ENCODE measurements at regions of chr2 and their contacts with region 1.

Region 1: GRCh38 chr2:132547074-132547687 is 122.8 kb downstream of the LYPD1 start:
- DNase-seq: peak; percentile 66 to 74
- H3K4me3 ChIP-seq: no peak overlapping the region
- H3K4me3 Mint-ChIP-seq: no peak overlapping the region
- H3K27ac Mint-ChIP-seq: no peak overlapping the region
- H3K4me1 ChIP-seq: peaks cover 16% of the 10 kb centered on the region
- H3K4me1 Mint-ChIP-seq: peaks cover 16% of the 10 kb centered on the region
- H3K27me3 ChIP-seq: no peaks in the 10 kb centered on the region
- H3K27me3 Mint-ChIP-seq: no peaks in the 10 kb centered on the region
- CTCF ChIP-seq: peak; percentile 65 to 76

Region 2: GRCh38 chr2:132416081-132416881 is 130.9 kb before region 1 on chr2 and contains the start of gene GPR39:
- CTCF ChIA-PET with region 1: no interaction called
- POLR2A ChIA-PET with region 1: no interaction called
- intact Hi-C with region 1: loop called (anchors 5 kb)
- DNase-seq: peak; percentile 99
- H3K4me3 ChIP-seq: peak within 1 kb of the TSS; percentile 59
- H3K4me3 Mint-ChIP-seq: peak within 1 kb of the TSS; percentile 84
- H3K27ac Mint-ChIP-seq: peak within 1 kb of the TSS; percentile 97
- H3K4me1 ChIP-seq: peaks cover 51% of the 10 kb centered on the region
- H3K4me1 Mint-ChIP-seq: peaks cover 49% of the 10 kb centered on the region
- H3K27me3 ChIP-seq: no peaks in the 10 kb centered on the region
- H3K27me3 Mint-ChIP-seq: no peaks in the 10 kb centered on the region
- CTCF ChIP-seq: no peak
- total RNA-seq, gene GPR39: 26.8 and 28.7 TPM in 2 replicates

Region 3: GRCh38 chr2:132562245-132562644 is 15.1 kb after region 1 on chr2:
- CTCF ChIA-PET with region 1: no interaction called
- POLR2A ChIA-PET with region 1: no interaction called
- intact Hi-C with region 1: no loop called
- DNase-seq: no peak
- H3K4me3 ChIP-seq: no peak overlapping the region
- H3K4me3 Mint-ChIP-seq: no peak overlapping the region
- H3K27ac Mint-ChIP-seq: no peak overlapping the region
- H3K4me1 ChIP-seq: peaks cover 5% of the 10 kb centered on the region; the same call in 1 of the 2 replicates
- H3K4me1 Mint-ChIP-seq: peaks cover 8% of the 10 kb centered on the region
- H3K27me3 ChIP-seq: no peaks in the 10 kb centered on the region
- H3K27me3 Mint-ChIP-seq: no peaks in the 10 kb centered on the region
- CTCF ChIP-seq: no peak

Region 4: DNA sequence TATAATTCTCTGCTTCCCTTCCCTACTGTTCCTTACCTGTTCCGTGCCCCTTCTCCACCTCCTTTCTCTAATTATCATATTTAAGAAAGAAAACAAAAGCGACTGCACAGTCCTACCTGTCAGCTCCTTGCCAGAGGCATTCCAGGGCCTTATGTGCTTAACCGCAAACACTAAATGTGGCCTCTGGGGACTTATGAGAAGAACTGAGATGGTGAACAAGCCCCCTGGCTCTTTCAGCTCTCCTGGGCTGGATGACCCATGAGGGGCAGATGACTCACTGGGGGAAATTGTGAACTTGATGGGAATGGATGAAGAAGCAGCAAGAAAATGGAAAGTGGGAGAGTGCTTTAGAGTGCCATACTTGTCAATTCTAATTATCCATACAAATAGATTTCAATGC is 229.1 kb after region 1 on chr2:
- CTCF ChIA-PET with region 1: no interaction called
- POLR2A ChIA-PET with region 1: no interaction called
- intact Hi-C with region 1: no loop called
- DNase-seq: no peak
- H3K4me3 ChIP-seq: no peak overlapping the region
- H3K4me3 Mint-ChIP-seq: no peak overlapping the region
- H3K27ac Mint-ChIP-seq: no peak overlapping the region
- H3K4me1 ChIP-seq: peaks cover 11% of the 10 kb centered on the region; the same call in 1 of the 2 replicates
- H3K4me1 Mint-ChIP-seq: peaks cover 6% of the 10 kb centered on the region
- H3K27me3 ChIP-seq: no peaks in the 10 kb centered on the region
- H3K27me3 Mint-ChIP-seq: no peaks in the 10 kb centered on the region
- CTCF ChIP-seq: no peak

Region 5: DNA sequence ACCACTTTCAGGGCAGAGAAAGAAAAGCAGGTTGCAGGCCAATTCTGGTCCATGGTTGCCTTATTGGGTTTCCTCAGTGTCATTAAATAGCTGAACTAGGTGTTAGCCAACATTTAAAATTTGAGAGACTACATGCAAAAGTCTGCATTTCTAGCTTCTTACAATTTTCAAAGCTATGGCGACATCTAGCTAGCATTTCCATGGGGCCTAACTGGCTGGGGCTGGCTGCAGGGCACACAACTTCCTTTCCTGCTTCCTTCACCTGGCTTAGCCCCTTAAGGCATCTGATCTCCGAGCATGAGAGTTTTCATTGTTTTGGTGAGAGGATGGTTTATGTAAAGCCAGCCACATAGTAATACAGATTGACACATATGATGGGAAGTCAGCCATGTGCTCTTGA is 305.9 kb after region 1 on chr2:
- CTCF ChIA-PET with region 1: no interaction called
- POLR2A ChIA-PET with region 1: no interaction called
- intact Hi-C with region 1: loop called (anchors 5 kb)
- DNase-seq: no peak
- H3K4me3 ChIP-seq: no peak overlapping the region
- H3K4me3 Mint-ChIP-seq: no peak overlapping the region
- H3K27ac Mint-ChIP-seq: no peak overlapping the region
- H3K4me1 ChIP-seq: no peaks in the 10 kb centered on the region
- H3K4me1 Mint-ChIP-seq: no peaks in the 10 kb centered on the region
- H3K27me3 ChIP-seq: no peaks in the 10 kb centered on the region
- H3K27me3 Mint-ChIP-seq: no peaks in the 10 kb centered on the region
- CTCF ChIP-seq: peak in 1 of 2 experiments; percentile 13

Region 6: GRCh38 chr2:133171393-133172004 is 624.3 kb after region 1 on chr2:
- CTCF ChIA-PET with region 1: interaction called, 7 read pairs
- POLR2A ChIA-PET with region 1: no interaction called
- intact Hi-C with region 1: loop called (anchors 1 kb)
- DNase-seq: peak in 1 of 2 experiments; percentile 59
- H3K4me3 ChIP-seq: no peak overlapping the region
- H3K4me3 Mint-ChIP-seq: no peak overlapping the region
- H3K27ac Mint-ChIP-seq: no peak overlapping the region
- H3K4me1 ChIP-seq: 0 out of 2 replicates have a peak, but pooled peaks cover 4% of the 10 kb centered on the region
- H3K4me1 Mint-ChIP-seq: no peaks in the 10 kb centered on the region
- H3K27me3 ChIP-seq: no peaks in the 10 kb centered on the region
- H3K27me3 Mint-ChIP-seq: no peaks in the 10 kb centered on the region
- CTCF ChIP-seq: peak; percentile 54 to 57